Posterior vena cava (tissue), 2 donors: ENCODE measurements at regions of chr11 and their contacts with region 1.

Region 1: GRCh38 chr11:67682675-67683074 is 8.3 kb upstream of the ALDH3B2 start:
- DNase-seq: no peak

Region 2: DNA sequence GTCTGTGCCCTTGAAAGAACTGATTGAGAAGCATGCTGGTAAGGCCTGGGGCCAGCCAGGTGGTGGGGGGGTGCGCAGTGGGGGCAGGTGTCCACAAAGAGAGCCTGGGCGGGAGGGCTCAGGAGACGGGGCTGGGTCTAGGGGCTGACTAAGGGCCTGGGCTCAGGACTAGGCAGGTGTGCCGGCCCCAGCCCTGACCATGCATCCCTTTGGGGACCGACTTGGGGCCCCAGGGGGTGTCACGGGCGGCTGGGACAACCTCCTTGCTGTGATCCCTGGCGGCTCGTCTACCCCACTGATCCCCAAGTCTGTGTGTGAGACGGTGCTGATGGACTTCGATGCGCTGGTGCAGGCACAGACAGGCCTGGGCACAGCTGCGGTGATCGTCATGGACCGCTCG is 71.5 kb before region 1 on chr11:
- intact Hi-C with region 1: loop called in 1 of 2 experiments (anchors 2 kb)
- DNase-seq: peak; percentile 78